ENCODE measurements at regions of chrX and their contacts with region 1.

Region 1: GRCh38 chrX:135543924-135544323 is 23.5 kb downstream of the INTS6L start:
- DNase-seq: no peak
- ATAC-seq: peak; percentile 64
- H3K4me3 Mint-ChIP-seq: peak overlapping the region; percentile 5
- H3K27ac Mint-ChIP-seq: peak overlapping the region; percentile 78
- H3K4me1 Mint-ChIP-seq: peaks cover 45% of the 10 kb centered on the region
- H3K27me3 Mint-ChIP-seq: no peaks in the 10 kb centered on the region
- CTCF ChIP-seq: no peak

Region 2: DNA sequence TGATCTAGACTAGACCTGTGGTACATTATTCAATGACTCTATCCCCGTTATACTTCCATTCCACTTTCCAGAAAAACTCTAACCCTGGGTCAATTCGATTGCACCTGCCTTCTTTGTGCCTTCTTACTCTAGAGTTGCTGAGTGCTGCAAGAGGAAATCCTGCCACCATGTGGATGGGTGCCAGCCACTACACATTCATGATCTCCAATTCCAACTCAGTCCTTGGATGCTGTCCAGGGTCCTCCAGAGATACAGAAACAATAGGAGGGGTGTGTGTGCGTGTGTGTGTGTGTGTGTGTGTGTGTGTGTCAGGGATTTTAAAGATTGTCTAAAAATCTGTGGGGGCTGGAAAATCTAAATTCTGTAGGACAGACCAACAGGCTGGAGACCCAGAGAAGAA is 66.3 kb before region 1 on chrX:
- CTCF ChIA-PET with region 1: no interaction called
- POLR2A ChIA-PET with region 1: no interaction called
- intact Hi-C with region 1: no loop called
- DNase-seq: no peak
- ATAC-seq: no peak
- H3K4me3 Mint-ChIP-seq: no peak overlapping the region
- H3K27ac Mint-ChIP-seq: no peak overlapping the region
- H3K4me1 Mint-ChIP-seq: no peaks in the 10 kb centered on the region
- H3K27me3 Mint-ChIP-seq: peaks cover 3% of the 10 kb centered on the region
- CTCF ChIP-seq: no peak

Region 3: DNA sequence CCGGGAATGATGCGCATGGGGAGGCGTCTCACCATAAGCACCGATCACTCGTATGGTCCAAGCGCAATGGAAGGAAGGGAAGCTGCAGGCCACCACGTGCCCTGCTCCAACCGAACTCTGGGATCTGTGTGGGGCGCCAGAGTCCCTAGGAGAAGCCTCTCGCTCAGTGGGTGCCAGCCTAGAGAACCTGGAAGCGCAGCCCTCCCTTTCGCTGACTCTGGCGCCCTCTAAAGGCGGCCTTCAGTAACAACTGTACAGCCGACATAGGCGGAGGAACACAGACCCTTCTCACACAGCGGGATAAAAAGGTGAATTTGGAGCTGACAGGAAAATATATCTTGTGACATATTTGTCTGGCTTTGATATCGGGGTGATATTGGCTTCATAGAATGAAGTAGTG is 52.6 kb after region 1 on chrX:
- CTCF ChIA-PET with region 1: no interaction called
- POLR2A ChIA-PET with region 1: no interaction called
- intact Hi-C with region 1: loop called (anchors 5 kb)
- DNase-seq: no peak
- ATAC-seq: peak; percentile 42
- H3K4me3 Mint-ChIP-seq: no peak overlapping the region
- H3K27ac Mint-ChIP-seq: no peak overlapping the region
- H3K4me1 Mint-ChIP-seq: no peaks in the 10 kb centered on the region
- H3K27me3 Mint-ChIP-seq: peaks cover 5% of the 10 kb centered on the region
- CTCF ChIP-seq: no peak

Region 4: DNA sequence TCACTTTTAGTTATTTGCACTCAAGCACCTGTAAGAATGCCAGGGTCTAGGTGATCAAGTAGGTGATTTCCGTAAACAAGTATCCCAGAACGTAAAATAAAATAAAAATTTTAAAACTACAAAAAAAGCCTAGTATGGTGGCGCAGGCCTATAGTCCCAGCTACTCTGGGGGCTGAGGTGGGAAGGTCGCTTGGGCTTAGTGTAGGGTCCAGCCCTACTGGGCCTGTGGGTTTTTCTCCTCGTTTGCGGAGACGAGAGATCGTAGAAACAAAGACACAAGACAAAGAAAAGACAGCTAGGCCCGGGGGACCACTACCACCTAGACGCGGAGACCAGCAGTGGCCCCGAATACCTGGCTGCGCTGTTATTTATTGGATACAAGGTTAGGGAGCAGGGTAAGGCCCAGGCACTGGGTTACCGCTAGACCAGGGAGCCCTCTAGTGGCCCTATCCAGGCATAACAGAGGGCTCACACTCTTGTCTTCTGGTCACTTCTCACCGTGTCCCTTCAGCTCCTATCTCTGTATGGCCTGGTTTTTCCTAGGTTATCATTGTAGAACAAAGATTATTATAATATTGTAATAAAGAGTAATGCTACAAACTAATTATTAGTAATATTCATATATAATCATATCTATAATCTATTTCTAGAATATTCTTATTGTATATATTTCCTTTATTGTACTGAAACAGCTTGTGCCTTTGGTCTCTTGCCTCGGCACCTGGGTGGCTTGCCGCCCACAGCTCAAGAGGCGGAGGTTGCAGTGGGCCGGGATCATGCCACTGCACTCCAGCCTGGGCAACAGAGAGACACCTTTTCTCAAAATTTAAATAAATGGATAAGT is 387.9 kb after region 1 on chrX:
- CTCF ChIA-PET with region 1: interaction called, 4 read pairs
- POLR2A ChIA-PET with region 1: no interaction called
- intact Hi-C with region 1: loop called (anchors 10 kb)
- DNase-seq: peak; percentile 15
- ATAC-seq: no peak
- H3K4me3 Mint-ChIP-seq: no peak overlapping the region
- H3K27ac Mint-ChIP-seq: no peak overlapping the region
- H3K4me1 Mint-ChIP-seq: no peaks in the 10 kb centered on the region
- H3K27me3 Mint-ChIP-seq: no peaks in the 10 kb centered on the region
- CTCF ChIP-seq: no peak